Activated CD4-positive, alpha-beta T cell treated with anti-CD3 and anti-CD28 coated beads for 36 hours (primary cell): ENCODE measurements at regions of chr3 and their contacts with region 1.

Region 1: GRCh38 chr3:133573054-133573628 is 345 bp upstream of the CDV3 start:
- DNase-seq: peak; percentile 100
- ATAC-seq: peak; percentile 81
- H3K4me3 Mint-ChIP-seq: peak overlapping the region; percentile 87
- H3K27ac Mint-ChIP-seq: peak overlapping the region; percentile 100
- H3K4me1 Mint-ChIP-seq: peaks cover 47% of the 10 kb centered on the region
- H3K27me3 Mint-ChIP-seq: no peaks in the 10 kb centered on the region

Region 2: GRCh38 chr3:132659365-132660051 is 913.6 kb before region 1 on chr3 and contains the start of gene ACAD11:
- CTCF ChIA-PET with region 1: interaction called, 3 read pairs
- POLR2A ChIA-PET with region 1: no interaction called
- intact Hi-C with region 1: loop called in 1 of 2 experiments (anchors 1 kb)
- DNase-seq: peak; percentile 66
- ATAC-seq: peak; percentile 36
- H3K4me3 Mint-ChIP-seq: peak within 1 kb of the TSS; percentile 96
- H3K27ac Mint-ChIP-seq: peak within 1 kb of the TSS; percentile 98
- H3K4me1 Mint-ChIP-seq: peaks cover 51% of the 10 kb centered on the region
- H3K27me3 Mint-ChIP-seq: no peaks in the 10 kb centered on the region
- total RNA-seq, gene ACAD11: 16.1 to 16.9 TPM

Region 3: DNA sequence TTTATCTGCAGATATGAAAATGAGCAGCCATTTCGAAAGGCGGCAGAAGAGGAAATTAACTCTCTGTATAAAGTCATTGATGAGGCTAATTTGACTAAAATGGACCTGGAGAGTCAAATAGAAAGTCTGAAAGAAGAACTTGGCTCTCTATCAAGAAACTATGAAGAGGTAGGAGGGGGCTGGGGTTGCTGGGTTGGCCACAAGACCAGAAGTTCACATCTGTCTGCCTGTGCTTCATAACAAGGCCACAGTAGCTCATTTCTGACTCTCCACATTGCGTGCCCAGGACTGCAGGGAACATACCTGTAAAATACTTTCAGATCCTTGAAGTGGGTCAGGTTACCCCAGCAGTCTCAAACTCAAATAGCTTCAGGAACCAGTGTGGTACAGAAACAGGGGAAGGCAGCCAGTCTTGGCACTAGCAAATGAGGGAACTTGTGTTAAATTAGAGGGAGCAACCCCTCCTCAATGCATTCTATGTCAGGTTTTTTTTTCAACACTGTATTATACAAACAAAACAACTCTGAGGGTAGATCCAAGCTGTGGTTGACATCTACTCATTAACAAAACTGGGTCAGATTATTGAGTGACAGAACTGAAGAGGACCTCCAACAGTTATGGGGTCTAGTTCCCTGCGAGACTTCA is 124.5 kb before region 1 on chr3:
- CTCF ChIA-PET with region 1: interaction called, 3 read pairs
- POLR2A ChIA-PET with region 1: interaction called, 8 read pairs
- intact Hi-C with region 1: loop called (anchors 1 kb)
- DNase-seq: peak; percentile 77
- ATAC-seq: peak; percentile 93
- H3K4me3 Mint-ChIP-seq: no peak overlapping the region
- H3K27ac Mint-ChIP-seq: peak overlapping the region; percentile 69
- H3K4me1 Mint-ChIP-seq: peaks cover 38% of the 10 kb centered on the region
- H3K27me3 Mint-ChIP-seq: no peaks in the 10 kb centered on the region

Region 4: GRCh38 chr3:133506215-133506901 is 66.8 kb before region 1 on chr3:
- CTCF ChIA-PET with region 1: interaction called, 5 read pairs
- POLR2A ChIA-PET with region 1: interaction called, 4 read pairs
- intact Hi-C with region 1: loop called (anchors 1 kb)
- DNase-seq: peak; percentile 42
- ATAC-seq: peak; percentile 99
- H3K4me3 Mint-ChIP-seq: peak overlapping the region; percentile 48
- H3K27ac Mint-ChIP-seq: peak overlapping the region; percentile 87
- H3K4me1 Mint-ChIP-seq: peaks cover 13% of the 10 kb centered on the region
- H3K27me3 Mint-ChIP-seq: no peaks in the 10 kb centered on the region

Region 5: GRCh38 chr3:133661454-133662277 is 88.5 kb after region 1 on chr3 and contains the start of gene TOPBP1:
- CTCF ChIA-PET with region 1: interaction called, 4 read pairs
- POLR2A ChIA-PET with region 1: interaction called, 6 read pairs
- intact Hi-C with region 1: loop called (anchors 1 kb)
- DNase-seq: peak; percentile 94
- ATAC-seq: peak; percentile 85
- H3K4me3 Mint-ChIP-seq: peak within 1 kb of the TSS; percentile 91
- H3K27ac Mint-ChIP-seq: peak within 1 kb of the TSS; percentile 98
- H3K4me1 Mint-ChIP-seq: peaks cover 33% of the 10 kb centered on the region
- H3K27me3 Mint-ChIP-seq: no peaks in the 10 kb centered on the region
- total RNA-seq, gene TOPBP1: 80.9 to 94.6 TPM

Region 6: GRCh38 chr3:133750259-133750656 is 177.1 kb after region 1 on chr3:
- CTCF ChIA-PET with region 1: no interaction called
- POLR2A ChIA-PET with region 1: no interaction called
- intact Hi-C with region 1: no loop called
- DNase-seq: no peak
- ATAC-seq: no peak
- H3K4me3 Mint-ChIP-seq: no peak overlapping the region
- H3K27ac Mint-ChIP-seq: no peak overlapping the region
- H3K4me1 Mint-ChIP-seq: peaks cover 2% of the 10 kb centered on the region
- H3K27me3 Mint-ChIP-seq: peaks cover 17% of the 10 kb centered on the region

Region 7: GRCh38 chr3:134250717-134251220 is 677.6 kb after region 1 on chr3 and contains the start of gene RYK:
- CTCF ChIA-PET with region 1: no interaction called
- POLR2A ChIA-PET with region 1: no interaction called
- intact Hi-C with region 1: loop called in 1 of 2 experiments (anchors 5 kb)
- DNase-seq: peak; percentile 84
- ATAC-seq: peak; percentile 78
- H3K4me3 Mint-ChIP-seq: peak within 1 kb of the TSS; percentile 98
- H3K27ac Mint-ChIP-seq: peak within 1 kb of the TSS; percentile 98
- H3K4me1 Mint-ChIP-seq: peaks cover 68% of the 10 kb centered on the region
- H3K27me3 Mint-ChIP-seq: peaks cover 3% of the 10 kb centered on the region
- total RNA-seq, gene RYK: 23.5 to 24.0 TPM